ENCODE measurements at regions of chr6 and their contacts with region 1.

Region 1: DNA sequence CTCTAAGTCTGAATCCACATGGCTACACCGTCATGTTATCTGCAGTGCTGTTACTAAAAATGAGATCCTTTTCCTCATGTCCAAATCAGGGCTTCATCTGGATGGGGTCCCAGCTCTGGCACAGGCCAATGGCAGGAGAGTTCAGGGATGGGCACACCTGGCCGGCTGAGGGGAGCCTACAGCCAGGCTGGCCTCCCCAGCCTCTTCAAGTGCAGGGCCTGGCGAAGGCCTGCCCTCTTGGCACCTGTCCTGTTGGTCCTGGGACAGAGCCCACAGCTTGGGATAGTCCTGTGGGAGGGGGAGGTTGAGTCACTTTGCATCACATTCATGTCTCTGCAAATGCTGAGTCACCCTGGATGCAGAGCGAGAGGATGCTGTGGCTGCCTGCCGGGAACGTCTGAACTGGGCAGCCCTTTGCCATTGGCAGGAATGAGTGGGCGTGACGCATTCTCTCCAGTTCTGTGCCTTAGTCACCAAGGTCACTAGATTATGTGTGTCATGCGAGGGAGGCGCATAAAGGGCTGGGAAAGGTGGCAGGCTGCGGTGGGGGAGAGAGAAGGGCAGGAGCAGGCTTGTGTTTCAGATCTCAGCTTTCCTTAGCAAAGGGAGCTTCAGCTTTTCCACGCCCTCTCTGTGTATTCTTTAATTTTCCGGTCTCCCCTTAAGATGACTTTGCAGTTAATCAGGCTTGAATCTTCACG is 223.2 kb upstream of the ECI2 start:
- DNase-seq: peak; percentile 88 to 97 (median 90)
- ATAC-seq: peak; percentile 93 to 98 (median 96)
- H3K4me3 ChIP-seq: peak overlapping the region in 1 of 12 donors; percentile 12
- H3K27ac ChIP-seq: peak overlapping the region; percentile 76 to 99 (median 90)
- H3K4me1 ChIP-seq: peaks cover 0 to 19% (median 9%) of the 10 kb centered on the region in 12 donors
- H3K27me3 ChIP-seq: no peaks in the 10 kb centered on the region
- CTCF ChIP-seq: no peak
- POLR2A ChIP-seq: peak in 1 of 2 donors; percentile 46

Region 2: GRCh38 chr6:4291453-4292403 is 66.8 kb before region 1 on chr6:
- intact Hi-C with region 1: no loop called
- DNase-seq: peak in 1 of 5 donors; percentile 53
- ATAC-seq: peak in 2 of 4 donors; percentile 57 to 87
- H3K4me3 ChIP-seq: no peak overlapping the region
- H3K27ac ChIP-seq: no peak overlapping the region
- H3K4me1 ChIP-seq: peaks cover 0 to 11% (median 2%) of the 10 kb centered on the region in 12 donors
- H3K27me3 ChIP-seq: no peaks in the 10 kb centered on the region
- CTCF ChIP-seq: no peak
- POLR2A ChIP-seq: no peak

Region 3: DNA sequence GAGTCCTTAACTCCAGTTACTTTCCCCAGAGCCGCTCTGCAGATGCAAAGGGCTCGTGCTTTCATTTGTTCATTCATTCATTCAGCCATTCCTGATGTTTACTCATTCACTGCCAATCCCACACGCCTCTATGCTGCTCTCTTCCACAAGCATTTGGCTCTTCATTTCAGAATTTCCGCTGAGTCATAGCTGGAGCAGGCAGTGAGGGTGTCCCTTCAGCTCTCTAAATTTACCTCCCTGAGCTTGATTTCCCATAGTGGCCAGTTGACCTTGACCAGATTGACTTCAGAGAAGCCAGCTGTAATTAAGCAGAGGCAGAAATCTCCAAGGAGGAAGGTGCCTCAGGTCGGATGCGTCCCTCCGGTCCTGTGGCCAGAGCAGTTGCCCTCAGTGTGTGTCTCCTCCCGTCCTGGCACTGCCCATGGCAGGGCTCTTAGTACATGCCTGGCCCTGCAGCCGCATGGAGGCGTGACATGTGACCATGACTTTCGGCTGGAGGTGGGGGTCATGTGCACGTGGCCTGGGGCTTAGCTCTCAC is 43.9 kb after region 1 on chr6:
- intact Hi-C with region 1: loop called in 2 of 10 experiments (anchors 5 to 10 kb)
- DNase-seq: peak; percentile 49 to 64 (median 59)
- ATAC-seq: peak; percentile 72 to 92 (median 90)
- H3K4me3 ChIP-seq: peak overlapping the region in 1 of 12 donors; percentile 12
- H3K27ac ChIP-seq: peak overlapping the region; percentile 4 to 93 (median 74)
- H3K4me1 ChIP-seq: peaks cover 6 to 51% (median 20%) of the 10 kb centered on the region in 12 donors
- H3K27me3 ChIP-seq: no peaks in the 10 kb centered on the region
- CTCF ChIP-seq: no peak
- POLR2A ChIP-seq: no peak

Region 4: GRCh38 chr6:4610256-4610655 is 251.7 kb after region 1 on chr6:
- intact Hi-C with region 1: loop called in 1 of 10 experiments (anchors 10 kb)
- DNase-seq: peak in 4 of 5 donors; percentile 44 to 71 (median 63)
- ATAC-seq: peak in 3 of 4 donors; percentile 53 to 70 (median 59)
- H3K4me3 ChIP-seq: no peak overlapping the region
- H3K27ac ChIP-seq: peak overlapping the region in 1 of 12 donors; percentile 39
- H3K4me1 ChIP-seq: peaks cover 0 to 44% (median 17%) of the 10 kb centered on the region in 12 donors
- H3K27me3 ChIP-seq: no peaks in the 10 kb centered on the region
- CTCF ChIP-seq: no peak
- POLR2A ChIP-seq: no peak

Region 5: GRCh38 chr6:5827056-5827904 is 1468.7 kb after region 1 on chr6:
- intact Hi-C with region 1: no loop called
- DNase-seq: no peak
- ATAC-seq: no peak
- H3K4me3 ChIP-seq: no peak overlapping the region
- H3K27ac ChIP-seq: no peak overlapping the region
- H3K4me1 ChIP-seq: peaks cover 0 to 17% (median 2%) of the 10 kb centered on the region in 12 donors
- H3K27me3 ChIP-seq: no peaks in the 10 kb centered on the region
- CTCF ChIP-seq: no peak
- POLR2A ChIP-seq: no peak

Measured in heart left ventricle (tissue), 16 donors.